MCF 10A (cell line): ENCODE measurements at regions of chr10 and their contacts with region 1.

Region 1: DNA sequence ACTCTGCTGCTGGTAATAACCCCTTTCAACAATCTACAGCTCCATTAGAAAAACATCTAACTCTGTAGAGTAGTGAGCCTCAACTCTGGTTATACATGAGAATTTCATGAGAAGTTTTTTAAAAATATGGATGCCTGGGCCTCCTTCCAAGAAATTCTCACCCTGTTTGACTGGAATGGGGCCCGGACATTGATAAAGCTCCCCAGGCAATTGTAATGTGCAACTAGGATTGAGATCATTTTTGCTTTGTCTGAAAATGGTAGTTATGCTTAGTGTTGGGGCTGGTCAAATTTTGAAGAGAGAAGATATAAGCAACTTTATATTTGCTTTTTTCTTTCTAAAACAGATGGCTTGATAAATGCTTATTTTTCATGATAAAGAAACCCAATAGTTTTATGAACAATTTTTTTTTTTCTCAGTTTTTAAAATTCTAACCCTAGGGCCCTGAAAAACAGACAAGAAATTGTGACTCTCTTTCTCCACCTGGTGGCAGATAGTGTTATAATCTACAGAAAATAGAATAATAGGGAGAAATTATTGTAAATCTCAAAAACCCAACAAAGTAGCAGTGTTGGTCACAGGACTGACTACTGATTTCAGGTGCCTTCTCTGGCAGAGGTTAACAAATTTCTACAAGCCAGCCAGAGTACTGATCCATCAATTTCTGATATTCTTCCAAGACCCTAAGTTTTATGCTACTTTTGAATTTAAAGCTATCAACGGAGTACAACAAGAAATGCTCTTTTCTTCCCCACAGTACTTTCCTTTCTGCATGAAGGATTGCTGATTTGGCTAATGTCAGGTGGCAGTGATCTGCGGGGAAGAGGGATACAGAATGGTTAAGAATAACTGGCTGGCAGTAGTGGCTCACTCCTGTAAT is 174.8 kb downstream of the DKK1 start:
- DNase-seq: peak; percentile 71
- H3K4me3 Mint-ChIP-seq: no peak overlapping the region
- H3K27ac Mint-ChIP-seq: peak overlapping the region; percentile 88
- H3K4me1 Mint-ChIP-seq: peaks cover 15% of the 10 kb centered on the region
- H3K27me3 Mint-ChIP-seq: no peaks in the 10 kb centered on the region
- CTCF ChIP-seq: peak; percentile 53

Region 2: GRCh38 chr10:52443419-52444388 is 45.1 kb before region 1 on chr10:
- CTCF ChIA-PET with region 1: interaction called, 6 read pairs
- POLR2A ChIA-PET with region 1: interaction called, 18 read pairs
- intact Hi-C with region 1: no loop called
- DNase-seq: peak; percentile 84
- H3K4me3 Mint-ChIP-seq: peak overlapping the region; percentile 24
- H3K27ac Mint-ChIP-seq: peak overlapping the region; percentile 90
- H3K4me1 Mint-ChIP-seq: peaks cover 32% of the 10 kb centered on the region
- H3K27me3 Mint-ChIP-seq: no peaks in the 10 kb centered on the region
- CTCF ChIP-seq: no peak

Region 3: GRCh38 chr10:52451817-52452216 is 37.0 kb before region 1 on chr10:
- CTCF ChIA-PET with region 1: interaction called, 25 read pairs
- POLR2A ChIA-PET with region 1: interaction called, 58 read pairs
- intact Hi-C with region 1: loop called (anchors 2 kb)
- DNase-seq: peak; percentile 88
- H3K4me3 Mint-ChIP-seq: no peak overlapping the region
- H3K27ac Mint-ChIP-seq: no peak overlapping the region
- H3K4me1 Mint-ChIP-seq: peaks cover 28% of the 10 kb centered on the region
- H3K27me3 Mint-ChIP-seq: no peaks in the 10 kb centered on the region
- CTCF ChIP-seq: no peak

Region 4: GRCh38 chr10:52566471-52567246 is 77.8 kb after region 1 on chr10:
- CTCF ChIA-PET with region 1: interaction called, 32 read pairs
- POLR2A ChIA-PET with region 1: interaction called, 10 read pairs
- intact Hi-C with region 1: loop called (anchors 1 kb)
- DNase-seq: peak; percentile 77
- H3K4me3 Mint-ChIP-seq: no peak overlapping the region
- H3K27ac Mint-ChIP-seq: peak overlapping the region; percentile 14
- H3K4me1 Mint-ChIP-seq: peaks cover 20% of the 10 kb centered on the region
- H3K27me3 Mint-ChIP-seq: no peaks in the 10 kb centered on the region
- CTCF ChIP-seq: peak; percentile 51